ENCODE measurements at regions of chr2 and their contacts with region 1.

Region 1: GRCh38 chr2:178193823-178194599 is at the start of gene OSBPL6:
- DNase-seq: peak; percentile 87
- H3K4me3 ChIP-seq: peak within 1 kb of the TSS; percentile 61 to 88 (median 78)
- H3K27ac ChIP-seq: peak within 1 kb of the TSS; percentile 87 to 97 (median 89)
- H3K4me1 ChIP-seq: peaks cover 5% of the 10 kb centered on the region in 2 donors
- H3K27me3 ChIP-seq: no peaks in the 10 kb centered on the region
- CTCF ChIP-seq: peak in 3 of 6 experiments; percentile 21 to 51 (median 45)
- POLR2A ChIP-seq: peak in 1 of 2 donors; percentile 93
- total RNA-seq, gene OSBPL6: 2.1 to 5.3 (median 3.2) TPM

Region 2: GRCh38 chr2:178142274-178143065 is 51.5 kb before region 1 on chr2:
- intact Hi-C with region 1: loop called (anchors 10 kb)
- DNase-seq: no peak
- H3K4me3 ChIP-seq: no peak overlapping the region
- H3K27ac ChIP-seq: no peak overlapping the region
- H3K4me1 ChIP-seq: no peaks in the 10 kb centered on the region
- H3K27me3 ChIP-seq: no peaks in the 10 kb centered on the region
- CTCF ChIP-seq: no peak
- POLR2A ChIP-seq: no peak

Region 3: DNA sequence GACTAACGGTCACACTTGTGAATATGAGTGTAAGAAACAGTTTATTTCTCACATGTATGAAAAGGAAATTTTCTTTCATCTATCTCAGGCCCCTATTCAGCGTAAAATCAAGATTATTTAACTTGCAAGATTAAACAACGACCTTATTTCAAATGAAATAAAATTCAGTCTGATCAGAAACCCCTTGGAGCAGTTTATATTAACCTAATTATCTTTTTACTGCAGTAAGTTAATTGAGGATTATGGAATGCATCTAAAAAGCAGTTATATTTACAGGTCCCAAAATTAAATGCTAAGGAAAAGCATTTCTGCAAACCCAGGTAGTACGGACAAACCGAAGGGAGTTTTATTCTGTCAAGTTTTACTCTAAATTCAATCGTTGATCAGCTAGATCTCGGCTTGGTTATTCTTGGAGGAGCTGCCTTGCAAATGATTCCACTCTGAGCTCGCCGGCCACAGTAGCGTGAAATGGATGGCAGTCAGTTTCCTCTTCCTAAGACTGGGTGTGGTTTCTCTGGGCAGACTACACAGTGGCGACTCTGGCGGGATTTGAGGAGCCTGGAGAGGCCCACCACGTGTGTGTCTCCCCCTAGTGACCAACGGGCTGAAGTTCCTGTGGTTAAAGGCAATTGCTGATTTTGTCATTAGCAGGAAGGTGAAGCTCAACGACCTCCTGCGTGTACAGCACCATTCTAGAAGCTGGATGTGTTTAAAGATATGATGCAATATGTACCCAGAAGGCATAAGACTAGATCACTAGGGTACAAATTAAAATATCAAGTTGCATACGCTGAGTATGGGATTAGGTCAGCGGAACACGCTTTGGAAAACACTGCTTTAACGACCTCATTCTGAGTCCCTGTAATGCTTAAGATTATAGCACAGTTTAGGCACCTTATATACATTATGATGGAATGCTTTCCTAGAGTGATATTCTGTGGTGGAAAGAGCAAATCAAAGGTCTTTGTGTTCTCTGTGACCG is 220.5 kb after region 1 on chr2:
- intact Hi-C with region 1: loop called (anchors 10 kb)
- DNase-seq: peak; percentile 90 to 91
- H3K4me3 ChIP-seq: peak overlapping the region in 2 of 3 donors; percentile 62 to 70
- H3K27ac ChIP-seq: peak overlapping the region; percentile 91 to 96 (median 95)
- H3K4me1 ChIP-seq: peaks cover 3% of the 10 kb centered on the region in 2 donors
- H3K27me3 ChIP-seq: no peaks in the 10 kb centered on the region
- CTCF ChIP-seq: peak; percentile 60 to 91 (median 88)
- POLR2A ChIP-seq: peak in 1 of 2 donors; percentile 69